Psoas muscle (tissue), 8 donors: ENCODE measurements at regions of chr9 and their contacts with region 1.

Region 1: GRCh38 chr9:7906745-7907550 is 107.4 kb upstream of the DMAC1 start:
- DNase-seq: no peak
- ATAC-seq: no peak
- H3K4me3 ChIP-seq: no peak overlapping the region
- H3K27ac ChIP-seq: no peak overlapping the region
- H3K4me1 ChIP-seq: no peaks in the 10 kb centered on the region
- H3K27me3 ChIP-seq: no peaks in the 10 kb centered on the region
- CTCF ChIP-seq: no peak

Region 2: GRCh38 chr9:7921545-7922197 is 14.7 kb after region 1 on chr9:
- intact Hi-C with region 1: no loop called
- DNase-seq: no peak
- ATAC-seq: no peak
- H3K4me3 ChIP-seq: no peak overlapping the region
- H3K27ac ChIP-seq: no peak overlapping the region
- H3K4me1 ChIP-seq: no peaks in the 10 kb centered on the region
- H3K27me3 ChIP-seq: no peaks in the 10 kb centered on the region
- CTCF ChIP-seq: no peak

Region 3: DNA sequence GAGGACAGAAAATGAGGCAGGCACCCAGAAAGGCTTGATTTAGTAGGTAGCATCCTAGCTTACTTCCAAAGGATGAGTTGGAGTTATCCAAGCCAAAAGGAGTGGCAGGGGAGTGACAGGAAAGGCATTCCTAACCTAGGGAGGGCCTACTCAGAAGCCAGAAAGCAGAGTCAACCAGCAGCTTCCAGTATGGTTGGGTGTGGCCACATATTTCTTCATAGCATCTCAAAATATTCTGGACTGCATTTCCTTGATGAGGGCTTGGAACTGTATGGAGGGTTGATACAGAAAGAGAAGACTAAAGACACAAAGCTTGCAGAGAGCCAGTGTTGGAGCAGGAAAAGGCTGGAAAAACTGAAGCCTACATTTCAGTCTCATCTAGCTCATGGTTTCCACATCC is 549.4 kb after region 1 on chr9:
- intact Hi-C with region 1: loop called in 1 of 2 experiments (anchors 10 kb)
- DNase-seq: no peak
- ATAC-seq: peak in 1 of 4 donors; percentile 51
- H3K4me3 ChIP-seq: no peak overlapping the region
- H3K27ac ChIP-seq: no peak overlapping the region
- H3K4me1 ChIP-seq: no peaks in the 10 kb centered on the region
- H3K27me3 ChIP-seq: no peaks in the 10 kb centered on the region
- CTCF ChIP-seq: no peak